Esophagus muscularis mucosa (tissue), 4 donors: ENCODE measurements at regions of chr5 and their contacts with region 1.

Region 1: DNA sequence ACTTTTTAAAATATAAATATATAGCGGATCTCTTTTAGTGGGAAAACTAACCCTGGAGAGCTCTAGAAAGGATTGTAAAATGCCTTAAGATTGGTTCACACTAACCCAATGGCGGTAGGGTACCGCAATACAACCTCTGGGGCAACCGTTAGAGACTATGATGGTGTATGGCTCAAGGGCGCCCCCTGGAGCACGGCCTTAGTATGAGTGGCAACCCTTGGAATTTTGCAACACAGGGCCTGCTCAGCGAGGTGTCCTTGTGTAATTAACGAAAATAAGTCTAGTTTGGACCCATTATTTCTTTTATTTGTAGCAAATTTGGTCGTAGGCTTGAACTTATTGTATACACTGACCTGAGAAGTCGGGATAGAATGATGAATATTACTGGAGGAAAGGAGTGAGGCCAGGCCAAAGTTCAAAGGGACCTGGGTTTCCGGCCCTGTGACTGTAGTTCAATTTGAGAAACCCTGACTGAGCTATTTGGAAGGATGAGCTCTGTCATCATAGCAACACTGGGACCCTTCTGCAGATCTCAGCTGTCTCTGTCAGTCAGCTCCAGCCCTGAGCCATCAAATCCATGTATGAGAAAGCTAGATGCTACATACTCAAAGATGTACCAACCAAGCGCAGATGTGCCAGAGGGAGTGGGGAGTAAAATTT is 54.8 kb downstream of the CAMK4 start:
- DNase-seq: no peak
- H3K4me3 ChIP-seq: no peak overlapping the region
- H3K27ac ChIP-seq: no peak overlapping the region
- H3K4me1 ChIP-seq: no peaks in the 10 kb centered on the region
- H3K27me3 ChIP-seq: no peaks in the 10 kb centered on the region
- CTCF ChIP-seq: peak; percentile 55 to 74 (median 66)
- EP300 ChIP-seq: no peak
- POLR2A ChIP-seq: no peak

Region 2: DNA sequence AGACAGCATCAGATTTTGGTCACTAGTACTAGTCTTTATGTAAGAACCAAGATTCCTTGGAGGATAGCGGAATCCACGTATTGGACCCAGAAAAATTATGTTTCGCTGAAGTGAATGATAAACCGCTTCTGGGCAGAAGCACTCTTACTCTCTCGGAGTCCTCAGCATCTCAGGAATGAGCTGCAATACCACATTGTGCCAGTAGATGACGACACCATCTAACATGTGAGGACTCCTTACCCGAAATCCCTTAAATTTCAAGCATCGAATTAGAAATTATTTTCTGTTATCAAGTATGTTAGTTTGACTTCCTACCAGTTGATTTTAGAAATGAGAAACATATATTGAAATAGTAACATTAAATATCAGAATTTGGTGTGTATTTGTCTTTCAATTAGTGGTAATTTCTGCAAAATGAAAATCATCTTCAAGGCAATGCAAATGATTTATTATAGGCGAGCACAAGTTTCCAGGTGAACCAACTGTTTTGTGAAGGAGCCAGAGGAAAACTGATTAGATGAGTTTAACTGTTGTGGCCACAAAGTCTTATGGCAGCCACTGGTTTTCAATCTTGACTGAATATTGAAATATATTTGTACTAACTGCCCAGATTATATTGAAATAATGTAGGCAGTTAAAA is 120.8 kb before region 1 on chr5:
- intact Hi-C with region 1: loop called (anchors 1 kb)
- DNase-seq: no peak
- H3K4me3 ChIP-seq: no peak overlapping the region
- H3K27ac ChIP-seq: no peak overlapping the region
- H3K4me1 ChIP-seq: no peaks in the 10 kb centered on the region
- H3K27me3 ChIP-seq: no peaks in the 10 kb centered on the region
- CTCF ChIP-seq: peak in 2 of 3 experiments; percentile 97 to 98
- EP300 ChIP-seq: no peak
- POLR2A ChIP-seq: no peak